ENCODE measurements at regions of chr1 and their contacts with region 1.

Region 1: GRCh38 chr1:231806623-231807495 is 180.3 kb downstream of the DISC1 start:
- DNase-seq: peak; percentile 19
- ATAC-seq: peak; percentile 50
- H3K4me3 Mint-ChIP-seq: no peak overlapping the region
- H3K27ac Mint-ChIP-seq: no peak overlapping the region
- H3K4me1 Mint-ChIP-seq: no peaks in the 10 kb centered on the region
- H3K27me3 Mint-ChIP-seq: no peaks in the 10 kb centered on the region
- CTCF ChIP-seq: no peak

Region 2: DNA sequence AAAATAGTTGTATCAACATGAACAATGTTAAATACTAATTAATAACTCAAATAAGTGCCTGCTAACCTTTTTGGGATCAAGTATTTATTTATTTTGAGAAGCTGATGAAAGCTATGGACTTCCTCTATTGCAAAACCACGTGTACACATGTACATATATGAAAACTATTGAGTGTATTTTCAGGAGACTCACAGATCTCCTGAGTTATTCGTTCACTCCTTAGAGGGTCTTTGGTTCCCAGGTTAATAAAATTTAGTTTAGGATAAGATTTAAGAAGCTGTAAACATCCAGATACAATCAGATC is 49.8 kb before region 1 on chr1:
- CTCF ChIA-PET with region 1: interaction called, 10 read pairs
- POLR2A ChIA-PET with region 1: no interaction called
- intact Hi-C with region 1: loop called (anchors 1 kb)
- DNase-seq: no peak
- ATAC-seq: peak; percentile 40
- H3K4me3 Mint-ChIP-seq: peak overlapping the region; percentile 55
- H3K27ac Mint-ChIP-seq: no peak overlapping the region
- H3K4me1 Mint-ChIP-seq: peaks cover 6% of the 10 kb centered on the region
- H3K27me3 Mint-ChIP-seq: no peaks in the 10 kb centered on the region
- CTCF ChIP-seq: no peak

Region 3: GRCh38 chr1:231885209-231885854 is 78.5 kb after region 1 on chr1:
- CTCF ChIA-PET with region 1: no interaction called
- POLR2A ChIA-PET with region 1: no interaction called
- intact Hi-C with region 1: no loop called
- DNase-seq: no peak
- ATAC-seq: no peak
- H3K4me3 Mint-ChIP-seq: no peak overlapping the region
- H3K27ac Mint-ChIP-seq: no peak overlapping the region
- H3K4me1 Mint-ChIP-seq: no peaks in the 10 kb centered on the region
- H3K27me3 Mint-ChIP-seq: no peaks in the 10 kb centered on the region
- CTCF ChIP-seq: no peak